Psoas muscle (tissue), 8 donors: ENCODE measurements at regions of chr7 and their contacts with region 1.

Region 1: GRCh38 chr7:876167-876967 is at the start of gene GET4:
- DNase-seq: peak; percentile 98 to 99
- ATAC-seq: peak; percentile 70 to 77 (median 76)
- H3K4me3 ChIP-seq: peak within 1 kb of the TSS; percentile 80
- H3K27ac ChIP-seq: peak within 1 kb of the TSS; percentile 89
- H3K4me1 ChIP-seq: peaks cover 43% of the 10 kb centered on the region
- H3K27me3 ChIP-seq: no peaks in the 10 kb centered on the region
- CTCF ChIP-seq: peak; percentile 21
- total RNA-seq, gene GET4: 27.3 to 42.3 (median 29.1) TPM

Region 2: DNA sequence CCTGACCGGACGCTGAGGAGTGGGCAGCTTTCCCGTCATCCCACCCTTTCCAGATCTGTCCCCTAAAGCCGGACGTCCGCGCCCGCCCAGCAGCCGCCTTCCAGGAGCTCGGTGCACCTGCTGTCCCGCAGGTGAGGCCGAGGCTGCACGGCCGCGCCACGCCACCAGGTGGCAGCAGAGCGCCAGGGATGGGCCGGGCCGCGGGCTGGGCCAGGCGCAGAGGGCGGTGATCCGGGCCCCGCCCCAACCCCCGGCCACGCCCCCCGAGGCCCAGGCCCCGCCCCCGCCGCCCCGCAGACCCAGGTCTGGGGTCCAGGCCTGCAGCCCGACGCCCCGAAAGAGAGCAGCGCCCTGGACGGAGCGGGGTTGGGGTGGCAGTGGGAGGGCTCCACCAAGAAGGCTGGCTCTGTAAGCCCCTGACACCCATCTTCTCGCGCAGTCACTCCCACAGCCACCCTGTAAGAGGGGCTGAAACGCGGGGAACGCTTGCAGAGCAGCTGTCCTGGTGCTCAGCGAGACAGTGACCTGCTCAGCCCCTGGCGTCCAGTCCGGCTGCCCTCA is 554.2 kb before region 1 on chr7:
- intact Hi-C with region 1: loop called (anchors 10 kb)
- DNase-seq: peak; percentile 72 to 85
- ATAC-seq: peak; percentile 90 to 94 (median 92)
- H3K4me3 ChIP-seq: no peak overlapping the region
- H3K27ac ChIP-seq: no peak overlapping the region
- H3K4me1 ChIP-seq: no peaks in the 10 kb centered on the region
- H3K27me3 ChIP-seq: peaks cover 0 to 21% (median 0%) of the 10 kb centered on the region in 3 donors
- CTCF ChIP-seq: peak; percentile 94

Region 3: DNA sequence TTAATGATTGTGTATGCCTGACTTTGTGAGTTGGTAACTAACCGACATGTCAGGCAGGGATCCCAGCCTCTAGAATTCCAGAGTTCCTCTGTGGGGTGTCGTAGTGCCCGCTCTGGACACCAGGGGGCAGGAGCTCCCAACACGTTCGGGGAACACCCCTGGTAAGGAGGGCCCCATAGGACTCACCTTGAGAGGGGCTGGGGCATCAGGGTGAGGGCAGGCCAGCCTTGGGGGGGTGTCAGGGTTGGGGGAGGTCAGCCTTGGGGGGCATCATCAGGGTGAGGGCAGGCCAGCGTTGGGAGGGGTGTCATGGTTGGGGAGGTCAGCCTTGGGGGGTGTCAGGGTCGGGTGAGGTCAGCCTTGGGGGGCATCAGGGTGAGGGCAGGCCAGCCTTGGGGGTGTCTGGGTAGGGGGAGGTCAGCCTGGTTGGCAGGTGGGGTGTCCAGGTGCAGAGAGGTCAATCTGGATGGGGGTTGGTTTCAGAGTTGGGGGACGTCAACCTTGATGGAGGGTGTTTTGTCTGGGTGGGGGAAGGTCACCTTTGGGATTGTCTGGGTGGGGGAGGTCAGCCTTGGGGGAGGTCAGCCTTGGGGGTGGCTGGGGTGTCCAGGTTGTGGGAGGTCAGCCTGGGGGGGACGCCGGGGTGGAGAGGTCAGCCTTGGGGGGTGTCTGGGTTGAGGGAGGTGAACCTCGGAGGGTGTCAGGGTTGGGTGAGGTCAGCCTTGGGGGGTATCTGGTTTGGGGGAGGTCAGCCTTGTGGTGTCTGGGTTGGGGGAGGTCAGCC is 89.7 kb before region 1 on chr7:
- intact Hi-C with region 1: loop called (anchors 1 to 2 kb)
- DNase-seq: peak; percentile 78 to 87
- ATAC-seq: peak; percentile 89 to 94 (median 92)
- H3K4me3 ChIP-seq: no peak overlapping the region
- H3K27ac ChIP-seq: no peak overlapping the region
- H3K4me1 ChIP-seq: peaks cover 5% of the 10 kb centered on the region
- H3K27me3 ChIP-seq: no peaks in the 10 kb centered on the region
- CTCF ChIP-seq: peak; percentile 74

Region 4: GRCh38 chr7:821688-822087 is 54.7 kb before region 1 on chr7:
- intact Hi-C with region 1: loop called in 1 of 2 experiments (anchors 2 kb)
- DNase-seq: no peak
- ATAC-seq: peak; percentile 61 to 81 (median 70)
- H3K4me3 ChIP-seq: no peak overlapping the region
- H3K27ac ChIP-seq: peak overlapping the region; percentile 96
- H3K4me1 ChIP-seq: peaks cover 81% of the 10 kb centered on the region
- H3K27me3 ChIP-seq: no peaks in the 10 kb centered on the region
- CTCF ChIP-seq: peak; percentile 32

Region 5: GRCh38 chr7:836411-837400 is 39.7 kb before region 1 on chr7:
- intact Hi-C with region 1: loop called (anchors 5 kb)
- DNase-seq: no peak
- ATAC-seq: peak; percentile 37 to 63 (median 53)
- H3K4me3 ChIP-seq: peak overlapping the region; percentile 11
- H3K27ac ChIP-seq: peak overlapping the region; percentile 96
- H3K4me1 ChIP-seq: peaks cover 67% of the 10 kb centered on the region
- H3K27me3 ChIP-seq: no peaks in the 10 kb centered on the region
- CTCF ChIP-seq: peak; percentile 52